Spleen (tissue), 13 donors: ENCODE measurements at regions of chr15 and their contacts with region 1.

Region 1: GRCh38 chr15:88246666-88247446 is 9.7 kb downstream of the NTRK3 start:
- DNase-seq: peak; percentile 93
- H3K4me3 ChIP-seq: peak overlapping the region in 1 of 8 donors; percentile 38
- H3K27ac ChIP-seq: no peak overlapping the region
- H3K4me1 ChIP-seq: peaks cover 0 to 12% (median 8%) of the 10 kb centered on the region in 6 donors
- H3K27me3 ChIP-seq: peaks cover 0 to 51% (median 5%) of the 10 kb centered on the region in 7 donors
- CTCF ChIP-seq: peak; percentile 73 to 96 (median 92)
- POLR2A ChIP-seq: no peak

Region 2: DNA sequence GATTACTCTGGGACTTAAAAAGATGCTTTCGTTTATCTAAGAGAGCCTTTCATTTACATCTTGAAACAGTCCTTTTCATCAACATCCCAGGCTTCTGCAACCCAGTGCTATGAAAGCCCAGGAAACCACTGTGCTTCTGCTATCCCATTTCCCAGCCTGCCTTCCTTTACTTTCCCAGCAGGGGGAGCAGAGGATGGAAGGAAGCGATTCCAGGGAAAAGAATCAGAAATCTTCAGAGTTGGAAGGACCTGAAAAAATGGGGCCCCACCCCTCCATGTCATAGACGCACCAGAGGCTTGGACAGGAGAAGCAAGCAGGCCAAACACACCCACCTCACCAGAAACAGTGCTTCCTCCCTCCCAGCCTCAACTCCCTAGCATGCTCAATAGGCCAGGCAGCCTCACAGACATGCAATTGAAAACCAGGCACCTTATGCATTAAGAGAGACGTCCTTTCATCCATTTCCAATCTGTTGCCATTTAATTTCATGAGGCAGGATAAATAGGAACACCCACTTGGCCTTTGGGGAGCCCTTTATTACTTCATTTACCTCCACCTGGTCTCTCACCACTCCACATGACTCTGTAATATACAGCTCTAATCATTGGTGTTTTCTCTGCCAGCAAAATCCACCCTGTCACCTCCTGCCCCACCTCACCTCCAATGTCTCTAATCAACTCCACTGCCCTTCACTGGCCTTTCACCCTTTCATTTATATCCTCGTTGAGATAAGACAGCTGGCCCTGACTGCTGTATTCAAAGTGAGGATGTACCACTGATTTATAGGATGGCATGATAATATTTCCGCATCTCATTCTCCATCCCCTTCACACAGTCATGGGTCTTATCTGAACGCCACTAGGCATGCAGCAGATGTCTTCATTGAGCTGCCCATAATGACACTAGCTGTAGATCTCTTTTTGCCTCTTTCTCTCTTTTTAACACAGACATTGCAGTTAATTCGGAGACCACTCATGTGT is 574.3 kb before region 1 on chr15:
- intact Hi-C with region 1: loop called (anchors 10 kb)
- DNase-seq: no peak
- H3K4me3 ChIP-seq: no peak overlapping the region
- H3K27ac ChIP-seq: no peak overlapping the region
- H3K4me1 ChIP-seq: peaks cover 0 to 6% (median 0%) of the 10 kb centered on the region in 6 donors
- H3K27me3 ChIP-seq: no peaks in the 10 kb centered on the region
- CTCF ChIP-seq: peak in 8 of 11 experiments; percentile 21 to 69 (median 56)
- POLR2A ChIP-seq: no peak